CD8-positive, alpha-beta T cell (primary cell): ENCODE measurements at regions of chr6 and their contacts with region 1.

Region 1: DNA sequence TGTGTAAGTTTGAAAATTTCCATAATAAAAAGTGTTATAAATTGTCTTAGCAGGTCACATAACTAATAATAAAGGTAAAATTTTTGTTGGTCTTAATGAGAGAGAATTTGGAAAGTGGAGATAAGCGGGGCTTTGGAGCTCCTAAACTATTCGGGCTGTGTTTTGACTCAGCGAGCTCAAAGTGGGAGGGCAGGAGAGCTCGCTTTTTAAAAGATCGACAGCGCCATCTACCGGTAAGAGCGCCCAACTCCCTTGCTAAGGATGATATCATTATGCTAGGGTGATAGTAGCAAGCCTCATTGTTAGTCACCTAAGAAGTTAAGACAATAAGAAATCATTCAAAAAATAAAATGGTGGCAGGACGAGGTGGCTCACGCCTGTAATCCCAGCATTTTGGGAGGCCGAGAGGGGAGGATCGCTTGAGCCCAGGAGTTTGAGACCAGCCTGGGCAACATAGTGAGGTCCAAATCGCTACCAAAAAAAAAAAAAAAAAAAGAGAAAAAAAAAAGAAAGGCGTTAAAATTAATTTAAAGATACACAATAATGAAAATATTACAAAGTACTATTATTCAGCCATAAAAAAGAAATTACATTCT is 24.8 kb downstream of the C6orf15 start:
- DNase-seq: peak; percentile 80 to 93 (median 88)
- ATAC-seq: peak; percentile 98
- H3K4me3 ChIP-seq: no peak overlapping the region
- H3K4me3 Mint-ChIP-seq: no peak overlapping the region
- H3K27ac ChIP-seq: no peak overlapping the region
- H3K27ac Mint-ChIP-seq: no peak overlapping the region
- H3K4me1 ChIP-seq: no peaks in the 10 kb centered on the region
- H3K4me1 Mint-ChIP-seq: peaks cover 8% of the 10 kb centered on the region
- H3K27me3 ChIP-seq: no peaks in the 10 kb centered on the region
- H3K27me3 Mint-ChIP-seq: no peaks in the 10 kb centered on the region
- CTCF ChIP-seq: peak; percentile 63

Region 2: DNA sequence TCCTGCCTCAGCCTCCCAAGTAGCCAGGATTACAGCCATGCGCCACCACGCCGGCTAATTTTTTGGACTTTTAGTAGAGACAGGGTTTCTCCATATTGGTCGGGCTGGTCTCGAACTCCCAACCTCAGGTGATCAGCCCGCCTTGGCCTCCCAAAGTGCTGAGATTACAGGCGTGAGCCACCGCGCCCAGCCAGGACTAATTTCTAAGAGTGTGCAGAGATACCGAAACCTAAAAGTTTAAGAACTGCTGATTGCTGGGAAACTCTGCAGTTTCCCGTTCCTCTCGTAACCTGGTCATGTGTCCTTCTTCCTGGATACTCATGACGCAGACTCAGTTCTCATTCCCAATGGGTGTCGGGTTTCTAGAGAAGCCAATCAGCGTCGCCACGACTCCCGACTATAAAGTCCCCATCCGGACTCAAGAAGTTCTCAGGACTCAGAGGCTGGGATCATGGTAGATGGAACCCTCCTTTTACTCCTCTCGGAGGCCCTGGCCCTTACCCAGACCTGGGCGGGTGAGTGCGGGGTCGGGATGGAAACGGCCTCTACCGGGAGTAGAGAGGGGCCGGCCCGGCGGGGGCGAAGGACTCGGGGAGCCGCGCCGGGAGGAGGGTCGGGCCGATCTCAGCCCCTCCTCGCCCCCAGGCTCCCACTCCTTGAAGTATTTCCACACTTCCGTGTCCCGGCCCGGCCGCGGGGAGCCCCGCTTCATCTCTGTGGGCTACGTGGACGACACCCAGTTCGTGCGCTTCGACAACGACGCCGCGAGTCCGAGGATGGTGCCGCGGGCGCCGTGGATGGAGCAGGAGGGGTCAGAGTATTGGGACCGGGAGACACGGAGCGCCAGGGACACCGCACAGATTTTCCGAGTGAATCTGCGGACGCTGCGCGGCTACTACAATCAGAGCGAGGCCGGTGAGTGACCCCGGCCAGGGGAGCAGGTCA is 598.2 kb before region 1 on chr6 and contains the start of gene HLA-E:
- CTCF ChIA-PET with region 1: no interaction called
- POLR2A ChIA-PET with region 1: no interaction called
- intact Hi-C with region 1: loop called in 1 of 2 experiments (anchors 10 kb)
- DNase-seq: peak; percentile 75 to 100 (median 87)
- ATAC-seq: peak; percentile 80
- H3K4me3 ChIP-seq: peak within 1 kb of the TSS; percentile 93 to 99
- H3K4me3 Mint-ChIP-seq: peak within 1 kb of the TSS; percentile 99
- H3K27ac ChIP-seq: peak within 1 kb of the TSS; percentile 94 to 96
- H3K27ac Mint-ChIP-seq: peak within 1 kb of the TSS; percentile 98
- H3K4me1 ChIP-seq: peaks cover 31% of the 10 kb centered on the region
- H3K4me1 Mint-ChIP-seq: peaks cover 52% of the 10 kb centered on the region
- H3K27me3 ChIP-seq: no peaks in the 10 kb centered on the region
- H3K27me3 Mint-ChIP-seq: no peaks in the 10 kb centered on the region
- CTCF ChIP-seq: no peak
- total RNA-seq, gene HLA-E: 1,266 to 1,281 TPM

Region 3: DNA sequence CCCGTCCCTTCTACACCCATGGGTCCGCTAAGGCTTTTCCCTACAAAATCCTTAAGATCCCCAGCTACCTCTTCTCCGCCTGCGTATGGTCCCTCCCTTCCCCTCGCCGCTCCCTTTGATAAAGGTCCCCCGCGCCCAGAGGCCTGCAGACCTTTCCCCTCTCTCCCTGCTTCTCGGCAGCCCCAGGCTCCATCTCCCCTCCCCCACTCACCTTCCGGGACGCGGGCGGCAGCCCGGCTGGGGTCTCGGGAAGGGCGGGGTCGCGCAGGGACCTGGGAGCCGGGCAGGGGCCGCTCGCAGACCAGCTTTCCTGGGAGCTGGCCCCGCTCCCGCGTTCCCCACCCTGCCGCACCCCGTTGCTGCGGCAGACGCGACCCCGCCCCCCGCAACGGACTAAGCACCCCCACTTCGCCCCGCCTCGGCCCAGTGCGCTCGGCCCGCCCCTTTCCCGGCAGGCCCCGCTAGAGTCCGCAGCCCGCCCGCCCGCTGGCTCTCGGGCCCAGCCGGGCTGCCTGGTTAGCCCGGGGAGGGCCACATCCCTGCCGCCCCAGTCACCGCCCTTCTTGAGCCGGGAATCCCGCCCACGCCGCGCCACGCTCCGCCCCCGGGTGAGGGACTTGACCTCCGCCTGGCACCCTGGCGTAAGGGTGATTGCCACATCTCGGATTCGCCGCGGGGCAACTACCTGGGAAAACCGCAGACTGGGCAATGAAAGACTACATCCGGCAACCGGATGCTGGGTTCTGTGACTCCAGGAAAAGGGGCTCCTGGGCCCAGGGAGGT is 345.1 kb before region 1 on chr6 and contains the start of gene FLOT1:
- CTCF ChIA-PET with region 1: interaction called, 5 read pairs
- POLR2A ChIA-PET with region 1: no interaction called
- intact Hi-C with region 1: loop called in 1 of 2 experiments (anchors 5 kb)
- DNase-seq: peak; percentile 66 to 93 (median 80)
- ATAC-seq: peak; percentile 60
- H3K4me3 ChIP-seq: peak within 1 kb of the TSS; percentile 75 to 84
- H3K4me3 Mint-ChIP-seq: peak within 1 kb of the TSS; percentile 91
- H3K27ac ChIP-seq: peak within 1 kb of the TSS; percentile 49 to 68
- H3K27ac Mint-ChIP-seq: peak within 1 kb of the TSS; percentile 85
- H3K4me1 ChIP-seq: peaks cover 45% of the 10 kb centered on the region
- H3K4me1 Mint-ChIP-seq: peaks cover 60% of the 10 kb centered on the region
- H3K27me3 ChIP-seq: no peaks in the 10 kb centered on the region
- H3K27me3 Mint-ChIP-seq: no peaks in the 10 kb centered on the region
- CTCF ChIP-seq: no peak
- total RNA-seq, gene FLOT1: 27.5 to 27.8 TPM

Region 4: DNA sequence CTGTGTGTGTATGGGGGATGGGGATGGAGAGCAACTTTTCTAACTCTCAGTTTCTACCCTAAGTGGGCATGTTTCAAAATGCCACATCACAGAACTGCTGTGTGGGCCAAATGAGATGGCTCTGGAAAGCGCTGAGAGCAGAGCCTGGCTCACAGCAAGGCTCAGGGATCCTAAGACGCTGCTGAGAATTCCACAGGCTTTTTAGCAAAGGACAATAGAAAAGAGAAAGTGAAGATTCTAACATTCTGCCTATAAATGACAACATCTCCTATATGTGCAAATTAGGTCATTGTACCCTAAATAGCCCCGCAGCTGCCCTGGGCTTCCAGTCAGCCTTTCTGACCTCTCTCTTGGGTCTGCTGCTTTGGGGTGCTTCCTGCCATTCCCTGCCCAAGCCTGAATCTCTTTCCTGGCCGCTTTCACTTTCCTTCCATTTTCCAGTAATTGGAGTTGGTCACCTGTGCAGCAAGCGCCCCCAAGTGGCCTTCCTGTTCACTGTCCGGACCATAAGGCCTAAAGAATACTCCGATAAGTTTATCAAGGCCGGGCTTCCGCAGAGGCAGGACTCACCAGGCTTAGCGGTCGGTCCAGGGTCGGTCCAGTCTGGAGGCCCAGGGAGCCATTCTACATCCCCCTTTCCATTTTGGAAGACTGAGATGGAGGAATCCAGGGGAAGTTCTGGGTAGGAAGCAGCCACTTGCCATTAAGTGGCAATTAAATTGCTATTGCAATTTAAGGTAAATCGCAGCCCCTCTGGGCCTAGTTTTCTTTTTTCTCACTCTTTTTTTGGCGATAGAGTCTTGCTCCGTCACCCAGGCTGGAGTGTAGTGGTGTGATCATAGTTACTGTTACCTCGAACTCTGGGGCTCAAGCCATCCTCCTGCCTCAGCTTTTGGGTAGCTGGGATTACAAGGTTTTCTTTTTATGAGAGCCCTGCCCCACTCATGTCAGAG is 209.9 kb before region 1 on chr6:
- CTCF ChIA-PET with region 1: interaction called, 5 read pairs
- POLR2A ChIA-PET with region 1: no interaction called
- intact Hi-C with region 1: loop called in 1 of 2 experiments (anchors 1 kb)
- DNase-seq: peak; percentile 48 to 87 (median 74)
- ATAC-seq: peak; percentile 90
- H3K4me3 ChIP-seq: peak overlapping the region; percentile 38 to 46
- H3K4me3 Mint-ChIP-seq: peak overlapping the region; percentile 85
- H3K27ac ChIP-seq: peak overlapping the region in 1 of 2 experiments; percentile 49
- H3K27ac Mint-ChIP-seq: peak overlapping the region; percentile 87
- H3K4me1 ChIP-seq: peaks cover 15% of the 10 kb centered on the region
- H3K4me1 Mint-ChIP-seq: peaks cover 19% of the 10 kb centered on the region
- H3K27me3 ChIP-seq: no peaks in the 10 kb centered on the region
- H3K27me3 Mint-ChIP-seq: no peaks in the 10 kb centered on the region
- CTCF ChIP-seq: peak; percentile 70

Region 5: DNA sequence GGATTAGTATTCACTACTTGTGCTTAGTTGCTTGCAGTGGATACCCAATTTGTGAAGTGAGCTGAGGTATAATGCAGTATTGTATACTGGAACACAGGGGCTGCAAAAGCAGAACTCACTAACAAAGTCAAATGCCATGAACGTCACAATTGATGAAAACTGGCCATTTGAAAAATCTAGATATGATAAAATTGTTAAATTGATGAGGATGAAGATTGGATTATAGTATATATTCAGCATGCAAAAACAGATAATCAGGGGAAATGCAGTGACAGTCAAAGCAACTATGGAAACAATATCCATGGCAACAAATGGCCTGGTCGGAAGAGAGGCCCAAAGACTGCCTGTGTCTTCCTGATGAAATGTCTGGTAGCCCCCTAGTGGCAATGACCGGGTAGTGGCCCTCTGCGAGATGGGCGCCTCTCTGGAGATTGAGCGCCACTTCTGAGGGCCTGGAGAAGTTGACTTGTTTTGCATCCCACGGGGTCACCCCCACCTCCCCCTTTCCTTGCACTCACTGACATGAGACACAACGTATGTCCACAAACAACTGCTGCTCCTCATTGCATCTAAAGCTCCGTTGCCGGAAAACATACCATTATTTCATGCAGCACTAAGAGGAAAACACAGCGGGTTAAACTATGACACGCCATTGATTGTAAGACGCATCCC is 18.8 kb before region 1 on chr6:
- CTCF ChIA-PET with region 1: interaction called, 20 read pairs
- POLR2A ChIA-PET with region 1: no interaction called
- intact Hi-C with region 1: no loop called
- DNase-seq: peak; percentile 37 to 82 (median 67)
- ATAC-seq: peak; percentile 75
- H3K4me3 ChIP-seq: no peak overlapping the region
- H3K4me3 Mint-ChIP-seq: no peak overlapping the region
- H3K27ac ChIP-seq: no peak overlapping the region
- H3K27ac Mint-ChIP-seq: no peak overlapping the region
- H3K4me1 ChIP-seq: no peaks in the 10 kb centered on the region
- H3K4me1 Mint-ChIP-seq: no peaks in the 10 kb centered on the region
- H3K27me3 ChIP-seq: no peaks in the 10 kb centered on the region
- H3K27me3 Mint-ChIP-seq: peaks cover 2% of the 10 kb centered on the region
- CTCF ChIP-seq: peak; percentile 76

Region 6: GRCh38 chr6:31143148-31143547 is 55.6 kb after region 1 on chr6:
- CTCF ChIA-PET with region 1: no interaction called
- POLR2A ChIA-PET with region 1: no interaction called
- intact Hi-C with region 1: no loop called
- DNase-seq: no peak
- ATAC-seq: no peak
- H3K4me3 ChIP-seq: no peak overlapping the region
- H3K4me3 Mint-ChIP-seq: no peak overlapping the region
- H3K27ac ChIP-seq: no peak overlapping the region
- H3K27ac Mint-ChIP-seq: no peak overlapping the region
- H3K4me1 ChIP-seq: no peaks in the 10 kb centered on the region
- H3K4me1 Mint-ChIP-seq: no peaks in the 10 kb centered on the region
- H3K27me3 ChIP-seq: no peaks in the 10 kb centered on the region
- H3K27me3 Mint-ChIP-seq: no peaks in the 10 kb centered on the region
- CTCF ChIP-seq: no peak